Prostate gland (tissue), 2 donors: ENCODE measurements at regions of chr7 and their contacts with region 1.

Region 1: GRCh38 chr7:73446682-73447081 is 13.1 kb downstream of the FZD9 start:
- DNase-seq: no peak
- H3K4me3 ChIP-seq: no peak overlapping the region
- H3K27ac ChIP-seq: no peak overlapping the region
- H3K4me1 ChIP-seq: peaks cover 4% of the 10 kb centered on the region
- H3K27me3 ChIP-seq: no peaks in the 10 kb centered on the region
- CTCF ChIP-seq: no peak
- POLR2A ChIP-seq: no peak

Region 2: GRCh38 chr7:73342645-73343044 is 104.0 kb before region 1 on chr7:
- intact Hi-C with region 1: loop called (anchors 5 kb)
- DNase-seq: no peak
- H3K4me3 ChIP-seq: no peak overlapping the region
- H3K27ac ChIP-seq: no peak overlapping the region
- H3K4me1 ChIP-seq: no peaks in the 10 kb centered on the region
- H3K27me3 ChIP-seq: no peaks in the 10 kb centered on the region
- CTCF ChIP-seq: peak in 3 of 4 experiments; percentile 35 to 53 (median 44)
- POLR2A ChIP-seq: no peak

Region 3: DNA sequence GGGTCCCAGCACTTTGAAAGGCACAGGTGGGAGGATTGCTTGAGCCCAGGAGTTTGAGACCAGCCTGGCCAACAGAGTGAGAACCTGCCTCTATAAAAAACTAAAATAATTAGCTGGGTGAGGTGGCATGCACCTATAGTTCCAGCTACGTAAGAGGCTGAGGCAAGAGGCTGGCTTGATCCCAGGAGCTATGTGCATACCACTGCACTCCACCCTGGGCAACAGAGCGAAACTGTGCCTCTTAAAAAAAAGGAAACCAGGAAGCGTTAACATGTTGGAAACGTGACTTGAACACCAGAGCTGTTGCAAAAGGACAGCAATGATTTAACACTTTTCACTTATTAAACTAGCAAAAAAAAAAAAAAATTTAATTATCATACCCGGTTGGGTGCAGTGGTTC is 62.8 kb after region 1 on chr7:
- intact Hi-C with region 1: no loop called
- DNase-seq: no peak
- H3K4me3 ChIP-seq: no peak overlapping the region
- H3K27ac ChIP-seq: no peak overlapping the region
- H3K4me1 ChIP-seq: no peaks in the 10 kb centered on the region
- H3K27me3 ChIP-seq: no peaks in the 10 kb centered on the region
- CTCF ChIP-seq: no peak
- POLR2A ChIP-seq: no peak

Region 4: DNA sequence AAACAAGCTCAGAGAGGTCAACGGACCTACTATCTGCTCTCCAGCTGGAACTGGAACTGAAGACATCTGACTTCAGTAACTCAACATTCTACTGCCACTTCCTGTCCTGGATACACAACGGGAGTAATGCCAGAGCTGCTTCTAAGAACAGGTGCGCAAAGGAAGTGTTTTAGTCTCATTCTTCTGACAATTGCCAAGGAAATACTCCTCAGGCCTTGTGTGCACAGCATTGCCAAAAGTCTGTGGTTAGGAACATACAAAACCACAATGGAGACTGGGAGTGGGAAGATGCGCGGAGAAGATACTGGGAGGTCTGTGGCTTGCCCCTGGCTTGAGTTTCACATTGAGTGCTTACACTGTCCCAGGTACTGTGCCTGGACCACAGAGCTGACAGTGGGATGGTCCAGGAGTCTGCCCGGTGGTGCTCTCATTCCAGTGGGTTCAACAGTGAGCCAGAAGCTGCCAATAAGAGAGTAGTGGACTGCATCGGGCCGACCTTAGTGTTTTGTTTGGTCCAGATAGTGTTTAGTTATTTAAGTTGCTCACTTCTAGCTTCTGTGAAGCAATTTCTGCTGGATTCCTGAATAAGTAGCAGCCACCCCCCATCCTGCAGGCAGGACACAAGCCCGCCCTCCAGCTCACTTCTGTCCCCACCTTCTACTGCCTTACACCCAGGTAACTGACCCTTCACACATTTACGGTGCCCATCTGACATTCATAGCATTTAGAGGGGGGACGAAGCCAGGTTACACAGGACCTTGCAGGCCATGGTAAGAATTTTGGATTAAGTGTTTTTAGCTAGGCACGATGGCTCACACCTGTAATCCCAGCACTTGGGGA is 121.4 kb after region 1 on chr7:
- intact Hi-C with region 1: no loop called
- DNase-seq: no peak
- H3K4me3 ChIP-seq: no peak overlapping the region
- H3K27ac ChIP-seq: no peak overlapping the region
- H3K4me1 ChIP-seq: no peaks in the 10 kb centered on the region
- H3K27me3 ChIP-seq: no peaks in the 10 kb centered on the region
- CTCF ChIP-seq: no peak
- POLR2A ChIP-seq: no peak

Region 5: GRCh38 chr7:73758581-73759138 is 312.0 kb after region 1 on chr7:
- intact Hi-C with region 1: no loop called
- DNase-seq: peak; percentile 82
- H3K4me3 ChIP-seq: no peak overlapping the region
- H3K27ac ChIP-seq: peak overlapping the region; percentile 84 to 92
- H3K4me1 ChIP-seq: no peaks in the 10 kb centered on the region
- H3K27me3 ChIP-seq: no peaks in the 10 kb centered on the region
- CTCF ChIP-seq: no peak
- POLR2A ChIP-seq: no peak